ENCODE measurements at regions of chr11 and their contacts with region 1.

Region 1: DNA sequence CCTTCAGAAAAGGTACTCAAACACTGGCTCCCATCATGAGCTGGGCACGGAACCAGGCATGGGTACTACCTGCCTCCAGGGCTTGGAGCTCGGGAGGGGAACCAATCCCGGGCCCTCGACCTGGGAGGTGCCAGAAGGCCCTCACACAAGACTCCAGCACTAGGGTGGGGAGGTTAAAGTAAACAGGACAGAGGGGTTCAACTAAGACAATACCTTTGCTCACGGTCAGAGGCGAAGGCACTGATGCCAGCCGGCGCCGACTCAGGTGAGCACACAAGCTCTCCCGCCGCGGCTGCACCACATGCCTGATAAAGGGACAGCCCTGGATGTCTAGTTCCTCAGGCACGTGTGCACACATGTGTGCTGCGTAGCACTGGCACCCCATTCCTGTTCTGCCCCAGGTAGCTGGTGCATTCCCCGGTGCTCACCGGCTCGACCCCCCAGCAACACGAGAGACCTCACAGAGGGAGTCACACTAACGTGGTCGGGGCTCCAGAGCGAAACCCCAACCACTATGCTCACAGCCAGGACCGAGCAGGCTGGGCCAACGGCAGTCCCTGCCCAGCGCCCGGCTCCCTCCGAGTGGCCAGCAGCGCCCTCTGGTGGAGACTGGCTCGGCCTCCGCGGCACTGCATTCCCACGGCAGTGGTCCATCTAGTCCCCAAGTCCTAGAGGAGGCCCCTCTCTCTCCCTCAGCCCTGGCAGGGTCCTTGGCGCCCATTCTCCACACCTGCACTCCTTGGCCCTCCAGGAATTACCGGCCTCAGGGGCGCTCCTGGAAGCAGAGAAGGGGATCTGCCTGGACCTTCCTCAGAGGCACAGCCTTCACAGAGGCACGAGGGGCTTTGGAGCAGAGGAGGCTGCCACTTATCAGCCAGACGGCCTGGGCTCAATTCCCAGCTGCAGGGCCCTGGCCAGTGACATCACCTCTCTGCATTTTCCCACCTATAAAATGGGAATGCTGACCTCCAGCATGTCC is 28.8 kb upstream of the MOB2 start:
- DNase-seq: peak; percentile 82
- H3K4me3 Mint-ChIP-seq: no peak overlapping the region
- H3K27ac Mint-ChIP-seq: no peak overlapping the region
- H3K4me1 Mint-ChIP-seq: peaks cover 61% of the 10 kb centered on the region
- H3K27me3 Mint-ChIP-seq: no peaks in the 10 kb centered on the region

Region 2: GRCh38 chr11:1113405-1114201 is 401.8 kb before region 1 on chr11:
- CTCF ChIA-PET with region 1: no interaction called
- intact Hi-C with region 1: loop called (anchors 10 kb)
- DNase-seq: no peak
- H3K4me3 Mint-ChIP-seq: no peak overlapping the region
- H3K27ac Mint-ChIP-seq: no peak overlapping the region
- H3K4me1 Mint-ChIP-seq: no peaks in the 10 kb centered on the region
- H3K27me3 Mint-ChIP-seq: no peaks in the 10 kb centered on the region

Region 3: DNA sequence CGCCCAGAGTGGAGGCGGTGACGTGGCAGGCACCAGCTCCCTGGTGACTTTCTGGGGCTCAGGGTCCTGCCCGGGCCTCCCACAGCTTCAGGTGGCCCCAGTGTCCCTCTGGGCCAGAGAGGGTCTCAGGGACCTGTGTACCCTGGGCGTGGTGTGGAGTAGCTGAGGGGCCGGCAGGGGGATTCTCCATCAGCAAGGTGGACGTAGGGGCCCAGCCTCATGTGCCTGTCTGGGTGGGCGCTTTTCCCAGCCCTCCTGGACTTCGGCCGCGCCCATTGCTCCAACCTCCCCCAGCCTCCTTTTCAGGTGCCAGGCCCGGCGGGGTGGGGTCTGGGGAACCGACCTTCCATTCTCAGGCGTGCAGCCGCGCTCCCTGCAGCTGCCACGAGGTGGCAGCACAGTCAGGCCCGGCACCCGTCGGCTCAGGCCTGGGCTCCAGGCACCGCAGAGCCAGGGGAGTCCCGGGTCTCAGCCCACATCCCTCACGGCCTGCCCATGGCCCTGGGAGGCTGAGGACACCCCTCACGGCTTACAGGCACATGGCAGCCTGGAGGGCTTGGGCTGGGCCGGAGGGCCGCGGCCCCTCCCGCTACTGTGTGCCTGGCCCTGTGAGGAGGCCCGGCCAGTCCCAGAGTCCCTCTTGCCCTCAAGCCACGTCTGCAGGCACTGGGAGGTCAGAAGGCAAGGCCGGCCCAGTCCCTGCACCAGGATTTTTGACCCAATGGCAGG is 312.4 kb before region 1 on chr11:
- CTCF ChIA-PET with region 1: interaction called, 5 read pairs
- intact Hi-C with region 1: loop called (anchors 1 kb)
- DNase-seq: peak; percentile 68
- H3K4me3 Mint-ChIP-seq: no peak overlapping the region
- H3K27ac Mint-ChIP-seq: no peak overlapping the region
- H3K4me1 Mint-ChIP-seq: no peaks in the 10 kb centered on the region
- H3K27me3 Mint-ChIP-seq: no peaks in the 10 kb centered on the region

Region 4: DNA sequence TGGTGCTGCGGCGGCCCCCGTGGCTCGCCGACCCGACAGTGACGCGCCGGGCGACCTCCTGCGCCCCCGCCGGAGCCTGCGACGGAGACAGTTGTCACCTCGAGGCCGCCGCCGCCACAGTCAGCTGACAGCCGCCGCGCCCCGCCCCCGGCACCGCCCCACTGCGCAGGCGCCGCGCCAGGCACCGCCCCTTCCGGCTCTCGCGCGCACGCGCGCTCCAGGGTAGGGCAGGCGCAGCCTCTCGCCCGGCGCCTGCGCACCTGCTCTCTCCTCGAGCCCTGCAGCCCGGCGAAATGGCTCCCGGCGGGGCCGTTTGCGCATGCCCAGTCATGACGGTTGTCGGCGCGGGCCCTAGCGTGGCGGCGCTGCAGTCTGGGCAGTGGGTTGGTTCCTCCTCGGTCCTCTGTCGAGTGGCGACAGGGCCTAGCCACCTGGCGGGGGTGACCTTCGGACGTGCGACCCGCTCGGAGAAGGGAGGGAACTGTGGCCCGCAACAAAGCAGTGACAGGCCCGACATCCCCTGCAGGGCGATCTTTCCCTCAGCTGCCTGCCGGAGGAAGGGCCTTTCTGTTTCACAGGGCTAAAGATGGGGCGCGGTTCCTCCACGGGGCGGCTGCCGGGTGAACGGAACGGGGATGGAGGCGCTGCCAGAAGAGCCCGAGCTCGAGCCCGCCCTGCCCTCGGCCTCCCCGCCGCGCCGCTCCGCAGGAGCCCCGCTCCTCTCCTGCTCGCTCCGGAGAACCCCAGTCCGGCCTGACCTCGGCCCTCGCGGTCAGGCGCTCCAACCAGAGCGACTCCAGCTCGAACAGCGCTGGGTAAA is 205.7 kb before region 1 on chr11 and contains the start of gene TOLLIP:
- CTCF ChIA-PET with region 1: no interaction called
- intact Hi-C with region 1: loop called (anchors 10 kb)
- DNase-seq: peak; percentile 97
- H3K4me3 Mint-ChIP-seq: peak within 1 kb of the TSS; percentile 89
- H3K27ac Mint-ChIP-seq: peak within 1 kb of the TSS; percentile 94
- H3K4me1 Mint-ChIP-seq: peaks cover 40% of the 10 kb centered on the region
- H3K27me3 Mint-ChIP-seq: no peaks in the 10 kb centered on the region
- total RNA-seq, gene TOLLIP: 19.9 to 21.7 TPM

Region 5: GRCh38 chr11:1453611-1454034 is 61.7 kb before region 1 on chr11:
- CTCF ChIA-PET with region 1: interaction called, 3 read pairs
- intact Hi-C with region 1: loop called (anchors 1 kb)
- DNase-seq: peak; percentile 82
- H3K4me3 Mint-ChIP-seq: no peak overlapping the region
- H3K27ac Mint-ChIP-seq: no peak overlapping the region
- H3K4me1 Mint-ChIP-seq: no peaks in the 10 kb centered on the region
- H3K27me3 Mint-ChIP-seq: no peaks in the 10 kb centered on the region

Region 6: DNA sequence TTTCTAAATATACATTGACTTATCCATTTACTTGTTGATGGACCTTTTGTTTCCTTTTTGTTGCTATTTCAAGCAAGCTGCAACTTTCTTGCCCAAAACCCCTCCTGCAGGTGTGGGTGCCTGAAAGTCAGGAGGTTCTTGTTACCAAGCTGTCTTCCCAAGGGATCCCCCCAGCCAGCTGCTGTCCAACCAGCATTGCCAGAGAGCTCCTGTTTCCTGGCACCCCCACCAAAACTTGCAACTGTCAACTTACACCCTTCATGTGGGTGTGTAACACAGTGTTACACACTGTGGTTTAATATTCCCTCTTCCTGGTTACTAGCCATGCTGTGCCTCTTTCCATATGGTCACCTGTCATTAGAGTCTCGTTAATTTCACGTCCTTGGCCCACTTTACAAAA is 71.3 kb after region 1 on chr11:
- CTCF ChIA-PET with region 1: no interaction called
- intact Hi-C with region 1: no loop called
- DNase-seq: no peak
- H3K4me3 Mint-ChIP-seq: no peak overlapping the region
- H3K27ac Mint-ChIP-seq: no peak overlapping the region
- H3K4me1 Mint-ChIP-seq: peaks cover 19% of the 10 kb centered on the region
- H3K27me3 Mint-ChIP-seq: peaks cover 11% of the 10 kb centered on the region

Region 7: DNA sequence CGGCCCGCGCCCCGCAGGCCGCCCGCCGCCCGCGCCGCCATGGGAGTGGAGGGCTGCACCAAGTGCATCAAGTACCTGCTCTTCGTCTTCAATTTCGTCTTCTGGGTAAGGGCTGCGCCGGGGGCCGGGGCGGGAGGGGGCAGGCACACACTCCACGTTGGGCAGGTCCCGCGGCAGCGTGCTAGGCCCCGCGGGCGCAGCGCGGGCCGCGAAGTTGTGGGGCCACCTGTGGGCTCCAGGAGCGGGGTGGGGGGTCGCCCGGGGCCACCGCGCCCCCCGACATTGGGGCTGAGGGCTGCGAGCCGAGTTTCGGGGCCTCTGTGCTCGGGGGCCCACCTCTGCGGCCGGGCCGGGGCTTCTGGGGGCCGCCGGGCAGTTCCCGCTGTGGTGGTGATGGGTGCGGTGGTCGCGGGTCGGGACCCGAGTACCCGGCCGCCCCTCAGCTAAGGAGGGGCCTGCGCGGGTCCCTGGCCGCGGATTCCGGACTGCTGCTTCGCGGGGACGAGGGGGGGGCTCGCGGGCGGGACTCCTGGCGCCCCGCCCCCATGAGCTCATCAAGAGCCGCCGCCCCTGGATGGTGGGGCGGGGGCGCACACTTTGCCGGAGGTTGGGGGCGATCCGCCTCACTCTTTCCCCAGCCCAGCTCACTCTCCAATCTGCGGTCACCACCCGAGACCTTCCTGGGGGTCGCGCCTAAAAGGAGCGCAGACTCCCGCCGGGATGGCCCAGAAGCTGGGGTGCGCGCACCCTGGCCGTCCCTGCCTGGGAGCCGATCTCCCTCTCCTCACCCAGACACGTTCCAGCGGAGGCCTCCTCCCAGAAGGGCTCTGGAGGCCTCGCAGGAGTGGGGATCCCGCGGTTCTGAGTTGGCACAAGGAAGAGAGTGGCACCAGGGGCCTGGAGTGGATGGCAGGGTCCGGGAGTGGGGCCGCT is 862.4 kb after region 1 on chr11:
- CTCF ChIA-PET with region 1: no interaction called
- intact Hi-C with region 1: no loop called
- DNase-seq: peak; percentile 56
- H3K4me3 Mint-ChIP-seq: peak overlapping the region; percentile 84
- H3K27ac Mint-ChIP-seq: peak overlapping the region; percentile 79
- H3K4me1 Mint-ChIP-seq: peaks cover 32% of the 10 kb centered on the region
- H3K27me3 Mint-ChIP-seq: no peaks in the 10 kb centered on the region

Measured in activated naive CD4-positive, alpha-beta T cell treated with anti-CD3 and anti-CD28 coated beads for 36 hours (primary cell).